ENCODE measurements at regions of chrX and their contacts with region 1.

Region 1: GRCh38 chrX:47093248-47093647 is 15.0 kb downstream of the RGN start:
- DNase-seq: no peak
- H3K4me3 Mint-ChIP-seq: no peak overlapping the region
- H3K27ac Mint-ChIP-seq: no peak overlapping the region
- H3K4me1 Mint-ChIP-seq: peaks cover 2% of the 10 kb centered on the region
- H3K27me3 Mint-ChIP-seq: no peaks in the 10 kb centered on the region

Region 2: GRCh38 chrX:46125111-46125510 is 968.1 kb before region 1 on chrX:
- intact Hi-C with region 1: no loop called
- DNase-seq: no peak
- H3K4me3 Mint-ChIP-seq: no peak overlapping the region
- H3K27ac Mint-ChIP-seq: no peak overlapping the region
- H3K4me1 Mint-ChIP-seq: peaks cover 2% of the 10 kb centered on the region
- H3K27me3 Mint-ChIP-seq: peaks cover 3% of the 10 kb centered on the region

Region 3: GRCh38 chrX:46903458-46904242 is 189.6 kb before region 1 on chrX:
- intact Hi-C with region 1: loop called (anchors 2 kb)
- DNase-seq: peak; percentile 82
- H3K4me3 Mint-ChIP-seq: peak overlapping the region; percentile 69
- H3K27ac Mint-ChIP-seq: no peak overlapping the region
- H3K4me1 Mint-ChIP-seq: no peaks in the 10 kb centered on the region
- H3K27me3 Mint-ChIP-seq: peaks cover 22% of the 10 kb centered on the region

Measured in activated CD4-positive, alpha-beta T cell treated with anti-CD3 and anti-CD28 coated beads, Interleukin-2, amount 10 ng/mL, durations not matched to agents 24 days and 14 days (primary cell).